ENCODE measurements at regions of chr10 and their contacts with region 1.

Region 1: DNA sequence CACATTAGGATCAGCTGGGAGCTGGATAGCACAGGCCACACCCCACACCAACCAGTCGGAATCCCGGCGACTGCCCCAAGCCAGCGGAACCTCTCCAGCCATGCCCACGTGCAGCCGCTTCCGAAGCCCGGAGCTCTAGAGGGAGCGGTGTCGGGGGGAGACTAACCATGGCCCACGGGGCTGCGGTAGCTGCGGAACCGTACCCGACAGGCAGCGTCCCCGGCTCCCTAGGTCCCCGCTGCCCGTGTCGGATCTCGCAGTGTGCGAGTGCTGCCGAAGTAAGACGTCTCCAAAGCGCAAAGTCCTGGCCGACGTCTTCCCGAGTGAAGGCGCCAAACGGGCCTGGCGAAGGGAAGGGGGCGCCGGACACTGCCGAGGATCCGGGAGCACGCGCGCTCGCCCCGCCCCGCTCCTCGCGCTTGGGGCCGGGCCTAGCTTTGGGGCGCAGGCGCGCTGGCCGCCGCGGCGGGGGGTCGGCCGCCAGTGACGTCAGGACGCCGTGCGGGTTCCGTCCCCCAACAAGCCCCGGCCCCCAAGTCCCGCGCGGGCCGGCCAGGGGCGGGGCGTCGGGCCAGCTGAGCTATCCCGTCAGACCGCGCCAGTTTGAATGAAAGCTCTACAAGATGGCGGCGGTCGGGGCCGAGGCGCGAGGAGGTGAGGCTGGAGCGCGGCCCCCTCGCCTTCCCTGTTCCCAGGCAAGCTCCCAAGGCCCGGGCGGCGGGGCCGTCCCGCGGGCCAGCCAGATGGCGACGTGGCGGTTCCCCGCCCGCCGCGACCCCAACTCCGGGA is at the start of gene SUV39H2:
- H3K4me3 ChIP-seq: peak within 1 kb of the TSS; percentile 82
- H3K27ac ChIP-seq: peak within 1 kb of the TSS; percentile 93
- H3K4me1 ChIP-seq: no peaks in the 10 kb centered on the region
- CTCF ChIP-seq: no peak

Region 2: GRCh38 chr10:14489522-14490177 is 388.8 kb before region 1 on chr10:
- CTCF ChIA-PET with region 1: interaction called, 6 read pairs
- POLR2A ChIA-PET with region 1: interaction called, 14 read pairs
- H3K4me3 ChIP-seq: no peak overlapping the region
- H3K27ac ChIP-seq: no peak overlapping the region
- H3K4me1 ChIP-seq: no peaks in the 10 kb centered on the region
- CTCF ChIP-seq: no peak

Region 3: DNA sequence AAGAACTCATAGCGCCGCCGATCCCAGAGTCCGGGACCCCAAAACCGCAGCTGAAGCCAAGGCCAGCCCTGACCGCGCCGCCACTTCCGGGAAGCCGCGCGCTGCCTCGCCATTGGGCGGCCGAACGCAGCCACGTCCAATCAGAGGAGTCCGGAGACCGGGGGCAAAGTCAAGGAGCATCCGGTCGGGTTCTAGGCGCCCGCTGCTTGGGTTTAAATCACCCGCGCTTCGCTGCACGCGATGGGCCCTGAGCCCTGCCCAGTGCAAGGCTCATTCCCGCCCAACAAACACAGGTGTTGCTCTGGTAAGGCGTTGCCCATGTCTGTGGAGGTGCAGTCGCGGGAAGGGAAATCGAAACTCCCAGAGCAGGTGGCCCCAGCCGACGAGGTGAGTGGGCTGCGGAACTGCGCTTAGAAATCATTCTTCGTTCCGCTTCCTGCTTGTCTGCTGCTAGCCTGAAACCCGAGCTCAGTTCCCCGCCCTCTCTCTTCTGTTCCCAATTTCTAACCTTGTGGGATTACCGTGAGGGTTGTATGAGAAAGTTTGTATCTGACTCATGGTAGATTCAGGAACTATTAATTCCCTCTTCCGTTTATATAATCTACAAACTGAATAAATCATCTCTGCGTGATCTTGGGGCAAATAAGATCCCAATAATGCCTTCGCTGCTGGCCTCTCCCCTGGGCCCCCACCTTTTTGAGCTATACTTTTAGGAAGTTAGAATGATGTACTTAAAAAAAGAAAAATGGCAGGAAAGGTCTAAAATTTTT is 75.7 kb after region 1 on chr10 and contains the start of gene DCLRE1C:
- CTCF ChIA-PET with region 1: interaction called, 3 read pairs
- POLR2A ChIA-PET with region 1: interaction called, 12 read pairs
- H3K4me3 ChIP-seq: peak within 1 kb of the TSS; percentile 80
- H3K27ac ChIP-seq: peak within 1 kb of the TSS; percentile 48; the same call in 1 of the 2 replicates
- H3K4me1 ChIP-seq: 0 out of 2 replicates have a peak, but pooled peaks cover 2% of the 10 kb centered on the region
- CTCF ChIP-seq: no peak

Region 4: GRCh38 chr10:14959276-14960057 is 81.0 kb after region 1 on chr10 and contains the start of gene MEIG1:
- CTCF ChIA-PET with region 1: no interaction called
- POLR2A ChIA-PET with region 1: interaction called, 12 read pairs
- H3K4me3 ChIP-seq: peak within 1 kb of the TSS; percentile 74
- H3K27ac ChIP-seq: peak within 1 kb of the TSS; percentile 90
- H3K4me1 ChIP-seq: no peaks in the 10 kb centered on the region
- CTCF ChIP-seq: no peak

Region 5: GRCh38 chr10:15046626-15047025 is 168.2 kb after region 1 on chr10:
- CTCF ChIA-PET with region 1: no interaction called
- POLR2A ChIA-PET with region 1: no interaction called
- H3K4me3 ChIP-seq: no peak overlapping the region
- H3K27ac ChIP-seq: no peak overlapping the region
- H3K4me1 ChIP-seq: no peaks in the 10 kb centered on the region
- CTCF ChIP-seq: no peak

Measured in HEK293 (cell line).